Prostate gland (tissue), 2 donors: ENCODE measurements at regions of chr16 and their contacts with region 1.

Region 1: GRCh38 chr16:72008424-72009216 is at the start of gene DHODH:
- DNase-seq: peak; percentile 96
- H3K4me3 ChIP-seq: peak within 1 kb of the TSS; percentile 59 to 61
- H3K27ac ChIP-seq: no peak within 1 kb of the TSS
- H3K4me1 ChIP-seq: no peaks in the 10 kb centered on the region
- H3K27me3 ChIP-seq: no peaks in the 10 kb centered on the region
- CTCF ChIP-seq: peak in 2 of 4 experiments; percentile 23 to 47
- POLR2A ChIP-seq: peak; percentile 51
- total RNA-seq, gene DHODH: 4.4 to 7.7 TPM

Region 2: GRCh38 chr16:71461686-71462648 is 546.7 kb before region 1 on chr16 and contains the start of gene ZNF23:
- intact Hi-C with region 1: loop called (anchors 5 kb)
- DNase-seq: peak; percentile 73
- H3K4me3 ChIP-seq: peak within 1 kb of the TSS; percentile 87 to 90
- H3K27ac ChIP-seq: peak within 1 kb of the TSS; percentile 75
- H3K4me1 ChIP-seq: no peaks in the 10 kb centered on the region
- H3K27me3 ChIP-seq: no peaks in the 10 kb centered on the region
- CTCF ChIP-seq: peak in 3 of 4 experiments; percentile 17 to 36 (median 21)
- POLR2A ChIP-seq: peak; percentile 43
- total RNA-seq, gene ZNF23: 6.1 to 6.8 TPM

Region 3: GRCh38 chr16:72093448-72094265 is 85.0 kb after region 1 on chr16 and contains the starts of genes DHX38 and TXNL4B:
- intact Hi-C with region 1: loop called (anchors 2 kb)
- DNase-seq: peak; percentile 97
- H3K4me3 ChIP-seq: peak within 1 kb of the TSS; percentile 76 to 78
- H3K27ac ChIP-seq: peak within 1 kb of the TSS; percentile 83
- H3K4me1 ChIP-seq: peaks cover 8% of the 10 kb centered on the region
- H3K27me3 ChIP-seq: no peaks in the 10 kb centered on the region
- CTCF ChIP-seq: peak in 1 of 4 experiments; percentile 30
- POLR2A ChIP-seq: peak; percentile 81
- total RNA-seq, gene DHX38: 61.9 to 63.9 TPM
- total RNA-seq, gene TXNL4B: 14.1 to 36.2 TPM